Gastrocnemius medialis (tissue), 4 donors: ENCODE measurements at regions of chr20 and their contacts with region 1.

Region 1: GRCh38 chr20:33666293-33667244 is at the start of gene ACTL10:
- DNase-seq: peak; percentile 85 to 93
- ATAC-seq: peak; percentile 75 to 89
- H3K4me3 ChIP-seq: peak within 1 kb of the TSS; percentile 65 to 78 (median 72)
- H3K27ac ChIP-seq: peak within 1 kb of the TSS; percentile 63 to 83 (median 77)
- H3K4me1 ChIP-seq: peaks cover 14 to 20% of the 10 kb centered on the region in 2 donors
- H3K27me3 ChIP-seq: no peaks in the 10 kb centered on the region
- CTCF ChIP-seq: peak in 1 of 5 experiments; percentile 26
- POLR2A ChIP-seq: peak; percentile 58 to 83
- total RNA-seq, gene ACTL10: 0.22 to 0.39 TPM in 2 of 4 donors, not detected in the others

Region 2: DNA sequence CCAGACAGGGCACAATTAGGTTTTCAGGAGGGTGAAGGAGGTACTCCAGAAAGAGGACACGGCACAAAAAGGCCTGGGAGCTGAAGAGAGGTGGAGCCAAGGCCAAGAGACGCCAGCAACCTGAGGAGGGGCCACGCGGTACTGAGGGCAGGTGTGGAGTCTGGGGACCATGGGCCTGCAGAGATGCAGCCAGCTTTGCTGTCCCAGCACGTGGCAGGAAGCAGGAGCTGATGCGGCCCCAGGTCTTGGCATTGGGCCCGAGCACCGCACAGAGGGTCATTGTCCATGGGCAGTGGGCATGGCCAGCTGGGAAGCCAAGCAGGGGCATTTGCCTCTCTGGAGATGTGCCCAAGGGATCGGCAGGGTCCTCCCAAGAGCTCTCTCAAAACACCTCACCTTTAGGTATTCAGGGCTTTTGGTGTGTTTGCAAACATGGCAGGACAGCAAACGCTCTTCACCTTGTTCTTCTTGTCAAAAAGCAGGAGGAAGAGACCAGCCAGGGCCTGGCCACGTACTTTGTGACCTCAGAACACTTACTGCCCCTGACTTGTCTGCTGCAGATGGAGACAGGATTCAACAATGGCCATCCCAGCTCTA is 384.9 kb before region 1 on chr20:
- in situ Hi-C with region 1: no loop called
- intact Hi-C with region 1: no loop called
- DNase-seq: no peak
- ATAC-seq: no peak
- H3K4me3 ChIP-seq: no peak overlapping the region
- H3K27ac ChIP-seq: no peak overlapping the region
- H3K4me1 ChIP-seq: no peaks in the 10 kb centered on the region
- H3K27me3 ChIP-seq: peaks cover 0 to 6% (median 5%) of the 10 kb centered on the region in 3 donors
- CTCF ChIP-seq: no peak
- POLR2A ChIP-seq: no peak

Region 3: DNA sequence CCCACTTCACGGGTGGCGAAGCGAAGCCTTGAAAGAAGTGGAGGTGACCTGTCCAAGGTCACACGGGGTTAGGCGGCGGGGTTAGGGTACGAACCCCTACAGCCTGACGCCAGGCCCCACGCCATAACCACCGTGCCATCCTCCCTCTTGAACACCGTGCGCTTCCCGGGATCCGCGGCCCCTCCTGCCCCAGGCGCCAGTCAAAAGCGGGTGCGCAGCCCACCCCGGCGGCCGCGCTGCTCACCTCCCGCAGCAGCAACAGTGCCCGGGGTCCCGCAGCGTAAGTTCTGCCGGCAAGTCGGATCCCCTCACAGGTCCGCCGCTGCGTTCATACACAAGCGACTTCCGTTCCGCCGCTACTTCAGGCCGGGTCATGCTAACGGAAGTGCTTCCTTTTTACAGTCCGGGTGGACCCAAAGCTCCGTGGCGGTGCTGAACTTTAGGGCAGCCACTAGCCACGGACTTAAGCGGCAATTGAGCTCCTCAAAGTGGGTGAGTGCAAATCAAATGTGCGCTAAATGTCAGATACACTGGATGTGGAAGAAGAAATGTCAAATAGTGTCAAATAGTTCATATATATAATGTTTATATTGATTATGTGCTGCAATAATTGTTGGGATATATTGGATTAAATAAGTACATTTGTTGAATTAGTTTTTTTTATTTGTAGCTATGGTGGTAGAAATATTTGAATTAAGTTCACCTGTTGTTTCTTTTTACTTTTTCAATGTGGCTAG is 265.2 kb before region 1 on chr20 and contains the start of gene CDK5RAP1:
- in situ Hi-C with region 1: no loop called
- intact Hi-C with region 1: loop called (anchors 5 kb)
- DNase-seq: peak; percentile 76 to 85
- ATAC-seq: peak; percentile 97
- H3K4me3 ChIP-seq: peak within 1 kb of the TSS; percentile 86 to 95 (median 90)
- H3K27ac ChIP-seq: peak within 1 kb of the TSS; percentile 74 to 87 (median 82)
- H3K4me1 ChIP-seq: peaks cover 27 to 34% of the 10 kb centered on the region in 2 donors
- H3K27me3 ChIP-seq: no peaks in the 10 kb centered on the region
- CTCF ChIP-seq: peak in 1 of 5 experiments; percentile 17
- POLR2A ChIP-seq: peak in 1 of 2 donors; percentile 47
- total RNA-seq, gene CDK5RAP1: 23.2 to 27.6 (median 25.8) TPM

Region 4: GRCh38 chr20:33450867-33451266 is 215.7 kb before region 1 on chr20:
- in situ Hi-C with region 1: loop called in 1 of 4 experiments (anchors 5 kb)
- intact Hi-C with region 1: loop called (anchors 2 kb)
- DNase-seq: peak in 1 of 2 donors; percentile 50
- ATAC-seq: peak; percentile 91 to 95
- H3K4me3 ChIP-seq: no peak overlapping the region
- H3K27ac ChIP-seq: no peak overlapping the region
- H3K4me1 ChIP-seq: peaks cover 0 to 6% of the 10 kb centered on the region in 2 donors
- H3K27me3 ChIP-seq: no peaks in the 10 kb centered on the region
- CTCF ChIP-seq: no peak
- POLR2A ChIP-seq: no peak

Region 5: DNA sequence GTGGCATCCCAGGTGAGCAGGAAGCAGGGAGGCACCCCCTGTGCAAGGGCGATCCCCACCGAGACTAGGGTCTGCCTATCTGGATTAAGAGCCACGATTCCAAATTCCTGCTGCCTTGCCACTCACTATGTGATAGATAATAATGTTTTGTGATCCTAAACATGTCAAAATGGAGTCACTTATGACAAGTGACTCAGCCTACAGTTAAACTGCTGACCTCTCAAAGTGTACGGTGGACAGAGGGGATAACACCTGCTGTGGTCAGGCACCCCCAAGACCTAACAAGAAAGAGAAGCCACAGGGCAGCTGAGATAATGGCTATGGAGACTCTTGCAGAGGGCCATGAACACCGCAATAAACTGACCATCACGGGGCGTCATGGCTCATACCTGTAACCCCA is 207.0 kb before region 1 on chr20:
- in situ Hi-C with region 1: loop called in 2 of 4 experiments (anchors 5 to 10 kb)
- intact Hi-C with region 1: loop called (anchors 2 kb)
- DNase-seq: no peak
- ATAC-seq: no peak
- H3K4me3 ChIP-seq: no peak overlapping the region
- H3K27ac ChIP-seq: no peak overlapping the region
- H3K4me1 ChIP-seq: no peaks in the 10 kb centered on the region
- H3K27me3 ChIP-seq: no peaks in the 10 kb centered on the region
- CTCF ChIP-seq: no peak
- POLR2A ChIP-seq: no peak

Region 6: DNA sequence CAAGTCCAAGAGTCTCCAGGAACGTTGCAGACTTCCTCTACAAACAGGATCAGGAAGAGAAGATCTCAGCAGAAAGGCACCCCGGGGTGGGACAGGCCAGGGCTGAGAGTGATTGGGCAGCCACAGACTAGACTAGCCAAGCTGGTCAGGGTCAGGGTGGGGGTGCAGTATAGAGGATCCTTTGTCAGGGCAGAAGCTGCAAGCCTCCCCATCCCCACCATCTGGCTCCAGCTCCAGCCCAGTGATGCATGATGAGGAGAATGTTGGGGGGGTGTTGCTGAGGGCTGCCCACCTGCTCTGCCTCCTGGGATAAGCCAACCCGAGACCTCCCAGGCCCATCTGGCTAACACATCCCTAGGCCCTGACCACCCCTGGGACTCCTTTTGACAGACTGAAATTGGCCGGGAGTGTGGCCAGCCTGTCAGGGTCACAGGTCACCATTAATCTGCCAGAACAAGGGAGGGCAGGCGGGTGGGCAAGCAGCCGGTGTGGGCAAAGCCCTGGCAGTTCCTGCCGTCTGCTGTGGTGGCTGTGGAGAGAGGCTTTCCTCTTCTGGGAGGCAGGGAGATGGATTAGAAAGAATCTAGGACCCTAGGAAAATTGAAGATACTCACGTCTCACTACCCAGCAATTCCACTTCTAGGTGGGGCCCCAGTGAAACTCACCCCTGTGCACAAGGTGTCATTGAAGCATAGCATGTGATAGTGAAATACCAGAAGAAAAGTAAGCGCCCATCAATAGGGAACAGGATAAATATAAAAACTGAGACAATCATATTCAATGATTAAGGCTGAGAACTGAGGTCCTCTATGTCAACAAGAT is 200.9 kb before region 1 on chr20:
- in situ Hi-C with region 1: loop called in 1 of 4 experiments (anchors 10 kb)
- intact Hi-C with region 1: no loop called
- DNase-seq: no peak
- ATAC-seq: no peak
- H3K4me3 ChIP-seq: no peak overlapping the region
- H3K27ac ChIP-seq: no peak overlapping the region
- H3K4me1 ChIP-seq: no peaks in the 10 kb centered on the region
- H3K27me3 ChIP-seq: no peaks in the 10 kb centered on the region
- CTCF ChIP-seq: no peak
- POLR2A ChIP-seq: no peak

Region 7: DNA sequence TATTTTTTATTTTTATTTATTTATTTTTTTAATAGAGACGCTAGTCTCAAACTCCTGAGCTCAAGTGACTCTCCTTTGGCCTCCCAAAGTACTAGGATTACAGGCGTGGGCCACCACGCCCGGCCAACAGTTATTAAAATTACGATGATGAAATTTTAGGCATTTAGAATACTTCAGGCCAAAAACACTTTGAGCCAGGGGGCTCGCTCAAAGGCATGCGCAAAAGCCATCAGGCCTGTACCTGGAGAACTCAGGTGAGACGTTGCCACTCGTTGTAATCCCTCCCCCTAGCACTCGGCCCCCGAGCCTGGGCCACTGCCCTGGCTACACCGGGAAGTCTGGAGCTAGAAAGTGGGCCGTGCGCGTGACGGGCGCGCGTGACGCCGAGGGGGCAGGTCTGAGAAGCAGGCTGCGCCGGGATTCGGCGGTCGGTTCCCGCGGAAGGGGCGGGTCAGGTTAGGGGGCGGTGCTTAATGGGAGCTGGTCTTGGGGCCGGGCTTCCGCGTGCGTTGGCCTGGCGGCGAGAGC is 177.0 kb before region 1 on chr20:
- in situ Hi-C with region 1: no loop called
- intact Hi-C with region 1: loop called (anchors 10 kb)
- DNase-seq: peak; percentile 99
- ATAC-seq: peak; percentile 96
- H3K4me3 ChIP-seq: peak overlapping the region; percentile 45 to 90 (median 56)
- H3K27ac ChIP-seq: peak overlapping the region; percentile 88 to 96 (median 96)
- H3K4me1 ChIP-seq: peaks cover 12 to 13% of the 10 kb centered on the region in 2 donors
- H3K27me3 ChIP-seq: no peaks in the 10 kb centered on the region
- CTCF ChIP-seq: no peak
- POLR2A ChIP-seq: peak; percentile 97 to 99

Region 8: DNA sequence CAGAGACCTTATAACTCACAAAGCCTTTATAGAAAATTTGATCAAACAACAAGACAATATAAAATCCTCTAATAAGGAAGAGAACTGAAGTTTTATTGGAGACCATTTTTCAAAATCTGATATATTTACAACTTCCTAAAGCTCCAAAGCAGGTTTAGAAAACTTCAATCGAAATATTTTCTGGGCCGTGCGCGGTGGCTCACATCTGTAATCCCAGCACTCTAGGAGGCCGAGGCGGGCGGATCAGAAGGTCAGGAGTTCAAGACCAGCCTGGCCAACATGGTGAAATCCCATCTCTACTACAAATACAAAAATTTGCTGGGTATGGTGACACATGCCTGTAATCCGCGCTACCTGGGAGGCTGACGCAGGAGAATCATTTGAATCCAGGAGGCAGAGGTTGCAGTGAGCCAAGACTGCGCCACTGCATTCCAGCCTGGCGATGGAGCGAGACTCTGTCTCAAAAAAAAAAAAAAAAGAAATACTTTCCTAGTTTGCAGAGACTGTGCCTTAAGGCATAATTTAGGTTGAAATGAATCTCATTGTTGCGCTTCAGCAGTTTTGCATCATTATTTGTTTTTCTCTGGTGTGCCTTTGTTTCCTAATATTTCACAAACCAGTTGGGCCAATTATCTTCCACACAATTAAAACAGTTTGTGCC is 514.0 kb after region 1 on chr20:
- in situ Hi-C with region 1: no loop called
- intact Hi-C with region 1: no loop called
- DNase-seq: no peak
- ATAC-seq: no peak
- H3K4me3 ChIP-seq: no peak overlapping the region
- H3K27ac ChIP-seq: no peak overlapping the region
- H3K4me1 ChIP-seq: no peaks in the 10 kb centered on the region
- H3K27me3 ChIP-seq: peaks cover 0 to 7% (median 5%) of the 10 kb centered on the region in 3 donors
- CTCF ChIP-seq: no peak
- POLR2A ChIP-seq: no peak